SK-N-SH (cell line): ENCODE measurements at regions of chr7 and their contacts with region 1.

Region 1: GRCh38 chr7:128209229-128210035 is 31.6 kb upstream of the LEP start:
- DNase-seq: peak; percentile 93
- H3K4me3 ChIP-seq: no peak overlapping the region
- H3K27ac ChIP-seq: no peak overlapping the region
- H3K4me1 ChIP-seq: peaks cover 0 to 3% of the 10 kb centered on the region in 2 experiments; a peak in 1 of 4 replicates
- H3K27me3 ChIP-seq: no peaks in the 10 kb centered on the region
- CTCF ChIP-seq: peak; percentile 99
- EP300 ChIP-seq: no peak
- RAD21 ChIP-seq: peak; percentile 100

Region 2: DNA sequence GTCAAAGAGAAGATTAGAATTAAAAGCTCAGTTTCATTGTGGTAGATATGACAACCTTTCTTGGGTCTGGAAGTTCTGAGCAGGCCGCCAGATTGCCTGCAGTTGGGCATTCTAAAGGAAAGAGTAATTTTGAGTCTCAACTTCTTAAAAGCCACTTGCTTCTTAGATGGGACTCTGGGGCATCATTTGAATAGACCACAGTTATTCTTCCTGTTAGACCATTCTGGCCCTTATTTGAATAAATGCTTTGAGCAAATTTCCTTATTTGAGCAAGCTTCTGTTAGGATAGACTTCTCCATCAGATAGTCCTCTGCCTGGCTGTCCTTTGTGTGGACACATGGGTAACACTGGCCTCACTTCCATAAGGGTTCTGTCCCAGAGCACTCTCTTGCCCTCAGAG is 517.2 kb before region 1 on chr7:
- CTCF ChIA-PET with region 1: interaction called, 35 read pairs
- POLR2A ChIA-PET with region 1: no interaction called
- DNase-seq: no peak
- H3K4me3 ChIP-seq: no peak overlapping the region
- H3K27ac ChIP-seq: no peak overlapping the region
- H3K4me1 ChIP-seq: peaks cover 0 to 3% of the 10 kb centered on the region in 2 experiments; a peak in 1 of 4 replicates
- H3K27me3 ChIP-seq: no peaks in the 10 kb centered on the region
- CTCF ChIP-seq: no peak
- EP300 ChIP-seq: no peak
- RAD21 ChIP-seq: no peak

Region 3: DNA sequence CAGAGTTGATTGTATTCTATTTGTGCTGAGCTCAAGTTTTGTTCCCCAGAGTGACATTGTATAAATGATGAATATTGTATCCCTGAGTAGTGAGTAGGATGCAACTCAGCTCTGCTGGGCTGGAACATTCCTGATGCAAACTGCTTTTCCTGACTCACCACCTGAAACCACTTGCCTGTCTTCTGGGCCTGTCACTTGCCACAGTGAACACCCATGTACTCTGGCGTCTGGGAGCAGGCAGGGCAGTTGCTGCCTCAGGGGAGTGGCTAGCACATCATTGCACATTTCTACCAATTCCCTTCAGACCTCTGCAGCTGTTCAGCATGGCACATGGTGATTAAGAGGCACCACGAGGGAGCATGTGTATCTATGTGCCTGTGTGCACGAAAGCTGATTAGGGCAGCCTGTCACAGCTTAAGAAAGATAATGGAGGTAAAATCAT is 400.1 kb before region 1 on chr7:
- CTCF ChIA-PET with region 1: interaction called, 16 read pairs
- POLR2A ChIA-PET with region 1: no interaction called
- DNase-seq: peak; percentile 54
- H3K4me3 ChIP-seq: no peak overlapping the region
- H3K27ac ChIP-seq: peak overlapping the region; percentile 7 to 64; a peak in 3 of 4 replicates
- H3K4me1 ChIP-seq: peaks cover 16 to 22% of the 10 kb centered on the region in 2 experiments
- H3K27me3 ChIP-seq: no peaks in the 10 kb centered on the region
- CTCF ChIP-seq: no peak
- EP300 ChIP-seq: no peak; a peak in 1 of 4 replicates
- RAD21 ChIP-seq: peak; percentile 32; the same call in 1 of the 2 replicates

Region 4: GRCh38 chr7:127935847-127936376 is 273.5 kb before region 1 on chr7:
- CTCF ChIA-PET with region 1: no interaction called
- POLR2A ChIA-PET with region 1: no interaction called
- DNase-seq: no peak
- H3K4me3 ChIP-seq: no peak overlapping the region
- H3K27ac ChIP-seq: no peak overlapping the region
- H3K4me1 ChIP-seq: peaks cover 16 to 19% of the 10 kb centered on the region in 2 experiments; a peak in 3 of 4 replicates
- H3K27me3 ChIP-seq: no peaks in the 10 kb centered on the region
- CTCF ChIP-seq: no peak
- EP300 ChIP-seq: no peak
- RAD21 ChIP-seq: no peak

Region 5: DNA sequence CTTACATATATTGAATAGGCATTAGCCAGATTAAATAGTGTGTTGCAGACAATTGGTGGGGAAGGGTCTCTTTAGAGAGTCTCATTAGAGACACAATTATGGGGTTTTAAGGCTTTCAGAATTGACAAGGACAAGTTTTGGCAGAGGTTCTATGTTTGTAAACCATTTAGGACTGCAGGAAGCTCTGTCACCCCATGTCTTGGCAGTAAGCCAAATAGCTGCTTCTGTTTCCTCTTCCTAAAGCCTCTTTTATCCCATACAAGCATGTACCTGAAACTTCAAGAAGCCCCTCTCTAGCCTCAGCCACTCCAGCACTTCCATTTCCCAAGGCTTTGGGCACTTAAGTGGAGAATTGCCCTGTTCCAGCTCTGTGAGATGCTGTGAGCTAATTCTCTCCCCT is 156.4 kb before region 1 on chr7:
- CTCF ChIA-PET with region 1: interaction called, 14 read pairs
- POLR2A ChIA-PET with region 1: no interaction called
- DNase-seq: peak; percentile 56
- H3K4me3 ChIP-seq: no peak overlapping the region
- H3K27ac ChIP-seq: peak overlapping the region in 1 of 2 experiments; percentile 19; a peak in 1 of 4 replicates
- H3K4me1 ChIP-seq: peaks cover 6 to 50% of the 10 kb centered on the region in 2 experiments; a peak in 3 of 4 replicates
- H3K27me3 ChIP-seq: no peaks in the 10 kb centered on the region
- CTCF ChIP-seq: no peak
- EP300 ChIP-seq: peak in 1 of 2 experiments; percentile 41; a peak in 1 of 4 replicates
- RAD21 ChIP-seq: no peak

Region 6: DNA sequence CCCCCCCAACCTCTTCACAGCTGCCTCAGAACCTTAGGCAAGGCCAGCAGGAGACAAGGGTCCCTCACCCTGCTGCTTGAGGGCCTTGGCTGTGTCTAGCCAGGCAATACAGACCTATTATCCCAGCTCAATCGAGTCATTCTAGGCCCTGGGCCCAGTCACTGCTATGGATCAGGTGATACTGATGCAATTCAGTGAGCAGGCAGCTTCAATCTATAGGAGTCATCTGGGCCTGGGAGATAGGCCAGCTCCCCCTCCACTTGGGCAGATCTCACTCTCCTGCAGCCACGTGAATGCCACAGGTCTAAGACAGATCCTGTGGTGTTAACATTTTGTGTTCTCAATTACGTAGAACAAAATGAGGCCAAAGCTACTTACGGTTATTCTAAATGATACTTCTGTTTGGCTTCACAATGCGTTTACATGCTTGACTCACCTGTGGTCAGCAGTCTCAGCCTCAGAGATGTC is 110.2 kb before region 1 on chr7:
- CTCF ChIA-PET with region 1: interaction called, 24 read pairs
- POLR2A ChIA-PET with region 1: no interaction called
- DNase-seq: no peak
- H3K4me3 ChIP-seq: no peak overlapping the region
- H3K27ac ChIP-seq: no peak overlapping the region
- H3K4me1 ChIP-seq: peaks cover 0 to 40% of the 10 kb centered on the region in 2 experiments; a peak in 2 of 4 replicates
- H3K27me3 ChIP-seq: no peaks in the 10 kb centered on the region
- CTCF ChIP-seq: no peak
- EP300 ChIP-seq: no peak
- RAD21 ChIP-seq: no peak

Region 7: DNA sequence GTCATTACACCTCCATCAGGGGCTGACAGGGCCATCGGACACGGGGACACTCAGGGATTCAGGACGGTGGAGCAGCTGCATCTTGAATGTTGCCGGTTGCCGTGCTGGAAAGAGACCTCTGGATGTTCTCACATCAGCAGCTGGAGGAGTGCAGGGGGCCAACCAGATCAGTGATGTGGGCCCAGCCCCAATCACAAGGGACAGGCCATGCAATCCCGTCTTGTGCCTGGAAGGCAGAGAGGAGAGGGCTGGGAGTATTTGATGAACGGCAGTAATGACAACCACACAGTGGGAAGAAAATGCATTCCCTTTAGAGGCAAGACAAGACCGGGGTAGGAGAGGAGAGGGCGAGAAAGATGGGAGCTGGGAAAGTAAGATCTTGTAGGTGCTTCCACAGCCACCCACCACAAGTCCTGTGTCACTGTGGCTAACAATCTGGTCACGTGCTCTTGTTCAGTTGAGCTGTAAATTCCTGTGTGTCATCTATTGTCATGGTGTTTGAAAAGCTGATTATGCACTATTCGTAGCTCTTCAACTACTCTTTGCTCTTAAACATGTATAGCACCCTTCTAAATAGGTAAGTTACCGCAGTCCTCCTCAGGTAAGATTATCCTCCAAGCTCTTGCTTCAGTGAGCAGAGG is 54.2 kb before region 1 on chr7:
- CTCF ChIA-PET with region 1: interaction called, 23 read pairs
- POLR2A ChIA-PET with region 1: no interaction called
- DNase-seq: no peak
- H3K4me3 ChIP-seq: no peak overlapping the region
- H3K27ac ChIP-seq: no peak overlapping the region
- H3K4me1 ChIP-seq: peaks cover 0 to 2% of the 10 kb centered on the region in 2 experiments; a peak in 1 of 4 replicates
- H3K27me3 ChIP-seq: peaks cover 23% of the 10 kb centered on the region; the same call in 1 of the 2 replicates
- CTCF ChIP-seq: no peak
- EP300 ChIP-seq: no peak
- RAD21 ChIP-seq: no peak

Region 8: DNA sequence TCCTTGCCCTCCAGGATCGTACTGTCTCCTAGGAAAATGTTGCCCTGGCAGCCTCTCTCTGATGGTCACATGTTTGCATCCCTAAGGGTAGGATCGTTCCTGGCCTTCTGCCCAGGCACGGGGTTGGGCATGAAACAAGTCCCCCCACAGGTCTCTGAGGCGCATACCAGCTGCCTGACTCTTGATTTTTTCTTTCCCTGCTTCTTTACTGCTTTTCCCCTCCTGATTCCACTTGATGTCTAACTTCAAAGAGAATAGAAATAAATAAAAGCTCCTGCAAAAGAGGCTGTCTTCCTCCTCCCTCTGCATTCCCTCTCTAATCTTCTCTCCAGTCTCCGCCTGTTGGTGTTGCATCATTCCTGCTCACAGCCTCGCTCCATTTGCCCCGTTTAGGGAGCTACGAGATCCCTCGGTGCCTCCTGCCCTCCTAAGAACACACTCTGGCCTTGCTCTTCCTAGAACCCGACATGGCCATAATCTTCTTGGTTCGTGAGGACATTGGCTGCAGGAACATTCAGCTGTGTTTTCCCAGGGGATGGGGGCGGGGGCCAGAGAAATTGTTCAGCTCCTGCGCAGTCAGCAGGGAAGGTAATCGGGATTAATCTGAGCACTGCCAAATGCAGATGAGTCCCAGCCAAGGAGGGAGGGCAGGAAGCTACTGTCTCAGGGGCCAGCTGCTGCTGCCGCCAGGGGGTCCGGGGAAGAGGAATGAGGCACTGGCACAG is 57.6 kb after region 1 on chr7:
- CTCF ChIA-PET with region 1: interaction called, 17 read pairs
- POLR2A ChIA-PET with region 1: interaction called, 3 read pairs
- DNase-seq: peak; percentile 90
- H3K4me3 ChIP-seq: peak overlapping the region; percentile 30 to 33; a peak in 3 of 4 replicates
- H3K27ac ChIP-seq: peak overlapping the region; percentile 54 to 99
- H3K4me1 ChIP-seq: peaks cover 18 to 41% of the 10 kb centered on the region in 2 experiments; a peak in 3 of 4 replicates
- H3K27me3 ChIP-seq: no peaks in the 10 kb centered on the region
- CTCF ChIP-seq: peak; percentile 34
- EP300 ChIP-seq: peak; percentile 8 to 77; a peak in 3 of 4 replicates
- RAD21 ChIP-seq: peak; percentile 41

Region 9: GRCh38 chr7:128347647-128348097 is 138.2 kb after region 1 on chr7:
- CTCF ChIA-PET with region 1: no interaction called
- POLR2A ChIA-PET with region 1: no interaction called
- DNase-seq: peak; percentile 89
- H3K4me3 ChIP-seq: no peak overlapping the region
- H3K27ac ChIP-seq: peak overlapping the region in 1 of 2 experiments; percentile 92; a peak in 2 of 4 replicates
- H3K4me1 ChIP-seq: peaks cover 0 to 44% of the 10 kb centered on the region in 2 experiments; a peak in 2 of 4 replicates
- H3K27me3 ChIP-seq: peaks cover 7% of the 10 kb centered on the region; the same call in 1 of the 2 replicates
- CTCF ChIP-seq: peak; percentile 98
- EP300 ChIP-seq: 0 out of 4 replicates have a peak, but pooled peaks of 1 of the 2 experiments have one; percentile 23
- RAD21 ChIP-seq: peak; percentile 100

Region 10: DNA sequence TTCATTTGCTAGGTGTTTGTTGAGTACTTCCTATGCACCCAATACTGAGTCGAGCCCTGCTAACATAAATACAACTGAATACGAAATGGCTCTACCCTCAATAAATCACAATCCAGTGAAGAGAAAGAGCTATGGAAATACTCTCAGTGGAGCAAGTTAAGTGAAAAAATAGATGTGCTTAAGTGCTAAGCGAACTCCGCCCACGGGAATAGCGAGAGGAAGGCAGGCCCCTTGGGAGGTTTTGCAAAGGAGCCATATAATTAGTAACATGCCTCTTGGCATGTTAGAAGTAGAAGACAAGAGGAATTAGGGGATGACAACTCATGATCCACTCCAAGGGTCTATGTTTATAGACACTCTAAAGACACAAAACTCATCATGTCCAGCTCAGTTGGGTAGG is 892.3 kb after region 1 on chr7:
- CTCF ChIA-PET with region 1: no interaction called
- POLR2A ChIA-PET with region 1: no interaction called
- DNase-seq: no peak
- H3K4me3 ChIP-seq: no peak overlapping the region; a peak in 1 of 4 replicates
- H3K27ac ChIP-seq: no peak overlapping the region
- H3K4me1 ChIP-seq: no peaks in the 10 kb centered on the region
- H3K27me3 ChIP-seq: peaks cover 5% of the 10 kb centered on the region; the same call in 1 of the 2 replicates
- CTCF ChIP-seq: no peak
- EP300 ChIP-seq: no peak
- RAD21 ChIP-seq: no peak